ENCODE measurements at regions of chr11 and their contacts with region 1.

Region 1: GRCh38 chr11:118917481-118918127 is 8.1 kb downstream of the BCL9L start:
- DNase-seq: peak; percentile 52
- ATAC-seq: peak; percentile 0; the same call in 1 of the 2 replicates
- H3K4me3 ChIP-seq: peak overlapping the region; percentile 45
- H3K27ac ChIP-seq: peak overlapping the region; percentile 97
- H3K4me1 ChIP-seq: peaks cover 98% of the 10 kb centered on the region
- H3K27me3 ChIP-seq: no peaks in the 10 kb centered on the region
- CTCF ChIP-seq: no peak

Region 2: DNA sequence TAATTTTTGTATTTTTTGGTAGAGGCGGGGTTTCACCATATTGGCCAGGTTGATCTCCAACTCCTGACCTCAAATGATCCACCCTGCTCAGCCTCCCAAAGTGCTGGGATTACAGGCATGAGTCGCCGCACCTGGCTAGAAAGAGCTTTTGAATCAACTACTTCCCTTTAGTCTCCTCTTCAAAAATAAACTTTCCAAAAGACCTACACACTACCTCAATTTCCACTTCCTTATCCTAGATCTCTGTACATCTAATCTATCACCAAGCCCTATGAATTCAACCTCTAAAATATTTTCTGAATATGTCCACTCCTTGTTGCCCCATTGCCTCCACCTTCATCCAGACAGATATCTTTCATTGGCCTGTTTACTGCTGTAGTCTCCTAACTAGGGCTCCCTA is 113.5 kb before region 1 on chr11:
- CTCF ChIA-PET with region 1: no interaction called
- POLR2A ChIA-PET with region 1: interaction called, 10 read pairs
- intact Hi-C with region 1: no loop called
- DNase-seq: no peak
- ATAC-seq: no peak
- H3K4me3 ChIP-seq: no peak overlapping the region
- H3K27ac ChIP-seq: no peak overlapping the region
- H3K4me1 ChIP-seq: no peaks in the 10 kb centered on the region
- H3K27me3 ChIP-seq: no peaks in the 10 kb centered on the region
- CTCF ChIP-seq: no peak

Region 3: DNA sequence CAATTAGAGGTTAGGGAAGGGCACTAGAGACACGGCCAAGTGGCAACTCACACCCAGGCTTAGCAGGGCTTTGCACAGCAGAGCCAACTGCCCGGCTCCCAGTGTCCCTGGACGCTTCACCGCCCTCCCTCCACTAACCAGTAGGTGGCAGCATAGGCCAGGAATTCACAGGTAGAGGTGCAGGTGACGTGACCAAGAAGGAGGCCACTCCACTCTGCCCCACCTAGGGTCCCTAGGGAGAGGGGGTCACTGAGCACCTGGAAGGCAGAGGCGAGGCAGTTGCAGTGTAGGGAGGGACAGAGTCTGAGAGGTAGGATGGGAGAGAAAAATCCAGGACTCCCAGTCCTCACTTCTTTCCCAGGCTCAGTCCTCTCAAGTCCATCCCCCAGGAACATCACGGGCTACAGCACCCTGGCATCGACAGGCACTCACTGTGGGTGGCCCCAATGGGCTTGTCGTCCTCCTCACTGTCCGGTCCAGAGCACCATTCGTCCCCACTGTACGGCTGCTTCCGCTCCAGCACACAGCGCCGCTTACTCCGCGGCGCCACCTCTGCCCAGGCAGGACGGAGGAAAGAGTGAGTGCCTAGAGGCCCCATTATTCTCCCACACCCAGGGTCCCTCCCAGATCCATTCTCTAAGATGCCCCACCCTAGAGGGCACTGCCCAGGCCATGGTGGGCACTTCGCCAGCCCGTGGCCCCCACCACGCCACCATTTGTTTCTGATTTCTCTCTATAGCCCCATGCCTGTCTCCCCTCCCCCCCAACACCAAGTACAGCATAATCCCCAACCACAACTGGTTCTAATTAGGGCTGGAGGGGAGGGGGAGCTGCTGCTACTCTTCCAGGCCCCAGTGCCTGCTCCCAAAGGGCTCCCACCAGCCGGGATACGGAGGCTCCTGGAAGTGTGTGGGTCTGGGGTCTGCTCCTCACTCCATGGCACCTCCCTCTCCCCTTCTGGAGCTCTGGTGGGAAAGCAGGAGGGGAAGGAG is 10.3 kb before region 1 on chr11:
- CTCF ChIA-PET with region 1: no interaction called
- POLR2A ChIA-PET with region 1: interaction called, 16 read pairs
- intact Hi-C with region 1: no loop called
- DNase-seq: peak; percentile 96
- ATAC-seq: peak; percentile 27
- H3K4me3 ChIP-seq: no peak overlapping the region
- H3K27ac ChIP-seq: no peak overlapping the region
- H3K4me1 ChIP-seq: peaks cover 43% of the 10 kb centered on the region
- H3K27me3 ChIP-seq: no peaks in the 10 kb centered on the region
- CTCF ChIP-seq: peak; percentile 98

Region 4: GRCh38 chr11:118997627-118998387 is 80.2 kb after region 1 on chr11 and contains the start of gene CENATAC:
- CTCF ChIA-PET with region 1: no interaction called
- POLR2A ChIA-PET with region 1: no interaction called
- intact Hi-C with region 1: no loop called
- DNase-seq: peak; percentile 95
- ATAC-seq: peak; percentile 92
- H3K4me3 ChIP-seq: peak within 1 kb of the TSS; percentile 77
- H3K27ac ChIP-seq: peak within 1 kb of the TSS; percentile 41
- H3K4me1 ChIP-seq: peaks cover 38% of the 10 kb centered on the region
- H3K27me3 ChIP-seq: no peaks in the 10 kb centered on the region
- CTCF ChIP-seq: no peak
- total RNA-seq, gene CENATAC: 83.5 and 88.0 TPM in 2 replicates

Region 5: GRCh38 chr11:119222308-119222707 is 304.7 kb after region 1 on chr11:
- CTCF ChIA-PET with region 1: no interaction called
- POLR2A ChIA-PET with region 1: no interaction called
- intact Hi-C with region 1: no loop called
- DNase-seq: peak; percentile 28
- ATAC-seq: no peak
- H3K4me3 ChIP-seq: no peak overlapping the region
- H3K27ac ChIP-seq: no peak overlapping the region
- H3K4me1 ChIP-seq: peaks cover 26% of the 10 kb centered on the region
- H3K27me3 ChIP-seq: no peaks in the 10 kb centered on the region
- CTCF ChIP-seq: no peak